ENCODE measurements at regions of chr9 and their contacts with region 1.

Region 1: DNA sequence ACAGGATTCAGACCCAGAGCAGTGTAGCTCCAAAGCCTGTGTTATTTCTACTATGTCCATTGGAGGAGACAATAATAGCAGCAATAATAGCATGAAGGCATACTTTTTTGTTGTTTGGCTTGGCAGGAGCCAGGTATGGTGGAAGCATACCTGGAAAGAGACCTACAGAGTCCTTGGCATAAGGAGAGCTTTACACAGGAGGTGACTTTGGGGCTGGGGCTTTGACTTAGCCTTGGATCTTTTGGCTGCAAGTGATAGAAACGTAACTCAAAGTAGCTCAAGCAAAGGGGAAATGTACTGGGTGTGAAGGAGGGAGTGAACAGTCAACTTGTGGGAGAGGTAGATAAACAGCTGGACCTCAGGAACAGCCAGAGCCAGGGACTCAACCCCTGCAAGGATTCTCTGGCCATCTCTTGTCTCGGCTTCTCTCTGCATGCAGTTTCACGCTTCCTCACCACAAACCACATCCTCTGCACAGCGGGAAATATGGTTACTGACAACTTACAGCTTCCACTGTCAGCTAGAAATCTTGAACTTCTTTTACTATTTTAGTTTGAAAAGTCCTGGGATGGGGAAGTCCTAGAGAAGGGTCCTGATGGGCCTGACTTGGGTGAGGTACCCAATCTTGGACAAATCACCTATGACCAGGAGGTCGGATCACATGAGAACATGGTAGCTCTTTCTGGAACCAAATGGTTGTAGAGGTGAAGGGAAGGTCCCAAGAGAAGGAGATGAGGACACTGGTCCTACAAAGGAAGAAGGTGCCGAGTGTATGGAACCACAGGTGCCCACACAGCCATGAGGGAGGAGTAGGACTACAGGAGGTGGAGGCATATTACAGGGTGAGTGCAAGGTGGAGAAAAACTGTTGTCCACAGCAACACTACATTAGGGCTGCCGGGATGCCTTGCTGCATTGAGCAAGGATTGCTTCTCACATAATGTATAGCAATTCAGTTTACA is 47.0 kb upstream of the TGFBR1 start:
- DNase-seq: peak; percentile 27 to 94 (median 60)
- ATAC-seq: peak; percentile 76
- H3K4me3 ChIP-seq: peak overlapping the region; percentile 47
- H3K4me3 Mint-ChIP-seq: peak overlapping the region; percentile 87
- H3K27ac ChIP-seq: peak overlapping the region in 1 of 2 donors; percentile 57
- H3K27ac Mint-ChIP-seq: peak overlapping the region; percentile 69
- H3K4me1 ChIP-seq: peaks cover 67% of the 10 kb centered on the region
- H3K4me1 Mint-ChIP-seq: peaks cover 76% of the 10 kb centered on the region
- H3K27me3 ChIP-seq: no peaks in the 10 kb centered on the region
- H3K27me3 Mint-ChIP-seq: no peaks in the 10 kb centered on the region
- CTCF ChIP-seq: no peak

Region 2: GRCh38 chr9:98998441-98999151 is 59.3 kb before region 1 on chr9:
- CTCF ChIA-PET with region 1: no interaction called
- POLR2A ChIA-PET with region 1: interaction called, 4 read pairs
- intact Hi-C with region 1: loop called in 1 of 2 experiments (anchors 5 kb)
- DNase-seq: peak; percentile 23 to 70 (median 42)
- ATAC-seq: peak; percentile 46
- H3K4me3 ChIP-seq: no peak overlapping the region
- H3K4me3 Mint-ChIP-seq: no peak overlapping the region
- H3K27ac ChIP-seq: no peak overlapping the region
- H3K27ac Mint-ChIP-seq: no peak overlapping the region
- H3K4me1 ChIP-seq: peaks cover 20% of the 10 kb centered on the region
- H3K4me1 Mint-ChIP-seq: peaks cover 26% of the 10 kb centered on the region
- H3K27me3 ChIP-seq: no peaks in the 10 kb centered on the region
- H3K27me3 Mint-ChIP-seq: no peaks in the 10 kb centered on the region
- CTCF ChIP-seq: peak; percentile 72

Region 3: GRCh38 chr9:99012942-99013512 is 44.9 kb before region 1 on chr9:
- CTCF ChIA-PET with region 1: interaction called, 3 read pairs
- POLR2A ChIA-PET with region 1: interaction called, 18 read pairs
- intact Hi-C with region 1: loop called in 1 of 2 experiments (anchors 5 kb)
- DNase-seq: peak in 3 of 14 experiments; percentile 27 to 45 (median 41)
- ATAC-seq: no peak
- H3K4me3 ChIP-seq: no peak overlapping the region
- H3K4me3 Mint-ChIP-seq: no peak overlapping the region
- H3K27ac ChIP-seq: peak overlapping the region in 1 of 2 donors; percentile 5
- H3K27ac Mint-ChIP-seq: peak overlapping the region; percentile 76
- H3K4me1 ChIP-seq: peaks cover 16% of the 10 kb centered on the region
- H3K4me1 Mint-ChIP-seq: peaks cover 28% of the 10 kb centered on the region
- H3K27me3 ChIP-seq: no peaks in the 10 kb centered on the region
- H3K27me3 Mint-ChIP-seq: no peaks in the 10 kb centered on the region
- CTCF ChIP-seq: no peak

Region 4: GRCh38 chr9:99076483-99077171 is 18.7 kb after region 1 on chr9:
- CTCF ChIA-PET with region 1: no interaction called
- POLR2A ChIA-PET with region 1: interaction called, 38 read pairs
- intact Hi-C with region 1: loop called (anchors 2 kb)
- DNase-seq: peak in 11 of 14 experiments; percentile 17 to 83 (median 44)
- ATAC-seq: peak; percentile 93
- H3K4me3 ChIP-seq: no peak overlapping the region
- H3K4me3 Mint-ChIP-seq: peak overlapping the region; percentile 42
- H3K27ac ChIP-seq: peak overlapping the region in 1 of 2 donors; percentile 64
- H3K27ac Mint-ChIP-seq: peak overlapping the region; percentile 68
- H3K4me1 ChIP-seq: peaks cover 37% of the 10 kb centered on the region
- H3K4me1 Mint-ChIP-seq: peaks cover 61% of the 10 kb centered on the region
- H3K27me3 ChIP-seq: no peaks in the 10 kb centered on the region
- H3K27me3 Mint-ChIP-seq: no peaks in the 10 kb centered on the region
- CTCF ChIP-seq: no peak

Region 5: DNA sequence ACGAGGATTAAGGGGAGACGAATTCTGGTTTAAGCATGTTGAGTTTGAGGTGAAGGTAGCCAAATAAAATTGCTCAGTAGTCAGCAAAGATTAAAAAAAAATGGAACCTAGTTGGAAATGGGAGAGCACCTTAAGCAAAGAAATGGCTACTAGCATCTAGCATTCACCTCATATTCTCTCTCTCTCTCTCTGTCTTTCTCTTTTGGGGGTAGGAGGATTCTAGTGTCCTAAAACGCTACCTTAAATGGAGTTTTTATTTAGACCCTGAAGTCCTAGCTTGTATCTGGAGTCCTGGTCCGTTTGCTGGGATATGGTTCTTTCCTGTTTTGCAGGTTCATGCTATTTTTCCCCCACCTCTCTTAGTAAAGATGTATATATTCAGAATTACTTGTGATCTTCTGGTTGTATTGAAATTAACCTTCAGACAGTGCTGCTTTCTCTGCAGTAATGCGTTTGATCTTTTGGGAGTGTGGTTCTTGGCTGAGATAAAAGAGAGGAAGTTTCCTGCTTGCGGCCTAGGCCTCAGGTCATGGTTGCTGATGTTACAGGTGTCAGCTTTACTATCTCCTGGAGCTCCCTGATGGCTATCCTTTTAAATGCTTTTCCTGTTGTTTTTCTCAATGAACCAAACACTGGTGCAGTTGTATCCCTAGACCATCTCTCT is 54.9 kb after region 1 on chr9:
- CTCF ChIA-PET with region 1: no interaction called
- POLR2A ChIA-PET with region 1: interaction called, 22 read pairs
- intact Hi-C with region 1: loop called in 1 of 2 experiments (anchors 2 kb)
- DNase-seq: peak in 13 of 14 experiments; percentile 18 to 88 (median 39)
- ATAC-seq: peak; percentile 95
- H3K4me3 ChIP-seq: peak overlapping the region; percentile 1
- H3K4me3 Mint-ChIP-seq: peak overlapping the region; percentile 71
- H3K27ac ChIP-seq: no peak overlapping the region
- H3K27ac Mint-ChIP-seq: peak overlapping the region; percentile 71
- H3K4me1 ChIP-seq: peaks cover 50% of the 10 kb centered on the region
- H3K4me1 Mint-ChIP-seq: peaks cover 84% of the 10 kb centered on the region
- H3K27me3 ChIP-seq: no peaks in the 10 kb centered on the region
- H3K27me3 Mint-ChIP-seq: no peaks in the 10 kb centered on the region
- CTCF ChIP-seq: no peak

Region 6: DNA sequence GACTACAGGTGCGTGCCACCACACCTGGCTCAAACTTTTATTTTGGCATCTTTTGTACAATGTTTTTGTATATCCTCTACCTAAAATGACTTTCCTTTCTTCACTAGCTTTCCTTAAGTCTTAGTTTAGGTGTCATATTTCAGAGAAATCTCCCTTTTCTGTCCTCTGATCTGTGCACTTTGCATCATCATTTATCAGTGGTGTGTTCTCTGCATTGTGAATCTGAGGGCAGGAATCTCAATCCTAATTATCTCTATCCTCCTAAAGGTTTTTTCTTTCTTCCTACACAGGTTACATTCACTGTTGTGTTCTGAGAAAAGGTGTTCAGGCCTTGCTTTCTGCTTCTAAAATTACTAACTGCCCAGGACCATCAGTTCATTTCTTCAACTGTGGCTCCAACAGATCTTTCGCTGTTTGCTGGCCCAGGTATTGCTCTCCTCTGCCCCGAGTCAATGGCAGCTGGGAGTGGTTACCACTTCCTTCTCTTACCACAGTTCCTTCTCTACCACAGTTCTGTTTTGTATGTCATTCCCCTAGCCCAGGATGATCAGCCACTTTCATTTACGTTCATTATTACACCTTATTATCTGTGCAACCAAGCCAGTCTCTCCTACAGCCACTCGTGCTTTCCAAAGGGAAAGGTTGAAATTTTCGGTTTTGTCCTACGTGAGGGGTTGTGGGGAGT is 61.0 kb after region 1 on chr9:
- CTCF ChIA-PET with region 1: no interaction called
- POLR2A ChIA-PET with region 1: interaction called, 22 read pairs
- intact Hi-C with region 1: no loop called
- DNase-seq: peak; percentile 21 to 88 (median 46)
- ATAC-seq: peak; percentile 99
- H3K4me3 ChIP-seq: peak overlapping the region; percentile 28
- H3K4me3 Mint-ChIP-seq: peak overlapping the region; percentile 42
- H3K27ac ChIP-seq: peak overlapping the region in 1 of 2 donors; percentile 22
- H3K27ac Mint-ChIP-seq: peak overlapping the region; percentile 70
- H3K4me1 ChIP-seq: peaks cover 32% of the 10 kb centered on the region
- H3K4me1 Mint-ChIP-seq: peaks cover 81% of the 10 kb centered on the region
- H3K27me3 ChIP-seq: no peaks in the 10 kb centered on the region
- H3K27me3 Mint-ChIP-seq: no peaks in the 10 kb centered on the region
- CTCF ChIP-seq: no peak

Region 7: DNA sequence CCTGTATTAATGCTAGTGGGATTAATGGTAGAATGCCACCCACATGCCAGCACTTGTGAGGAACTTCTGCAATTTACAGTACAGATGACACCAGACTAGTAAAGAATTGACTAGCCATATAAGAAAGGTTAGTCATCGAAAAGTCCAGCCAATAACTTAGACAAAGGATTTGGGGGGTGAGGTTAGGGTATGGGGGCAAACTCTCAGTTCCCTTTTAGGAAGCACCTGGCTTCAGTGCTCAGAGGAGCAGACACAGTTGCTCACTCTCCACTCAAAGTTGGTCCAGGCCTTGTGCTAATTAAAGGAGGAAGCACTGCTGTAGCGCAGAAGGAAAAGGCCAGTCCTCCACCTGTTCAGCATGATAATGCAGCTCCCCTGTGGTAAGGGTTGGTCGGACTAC is 72.1 kb after region 1 on chr9:
- CTCF ChIA-PET with region 1: no interaction called
- POLR2A ChIA-PET with region 1: interaction called, 34 read pairs
- intact Hi-C with region 1: loop called (anchors 1 to 5 kb)
- DNase-seq: peak in 1 of 14 experiments; percentile 30
- ATAC-seq: no peak
- H3K4me3 ChIP-seq: no peak overlapping the region
- H3K4me3 Mint-ChIP-seq: peak overlapping the region; percentile 4
- H3K27ac ChIP-seq: peak overlapping the region in 1 of 2 donors; percentile 8
- H3K27ac Mint-ChIP-seq: peak overlapping the region; percentile 79
- H3K4me1 ChIP-seq: peaks cover 36% of the 10 kb centered on the region
- H3K4me1 Mint-ChIP-seq: peaks cover 92% of the 10 kb centered on the region
- H3K27me3 ChIP-seq: no peaks in the 10 kb centered on the region
- H3K27me3 Mint-ChIP-seq: no peaks in the 10 kb centered on the region
- CTCF ChIP-seq: no peak

Region 8: GRCh38 chr9:99150451-99151171 is 92.7 kb after region 1 on chr9:
- CTCF ChIA-PET with region 1: no interaction called
- POLR2A ChIA-PET with region 1: no interaction called
- intact Hi-C with region 1: no loop called
- DNase-seq: peak in 3 of 14 experiments; percentile 42 to 55 (median 52)
- ATAC-seq: peak; percentile 95
- H3K4me3 ChIP-seq: no peak overlapping the region
- H3K4me3 Mint-ChIP-seq: peak overlapping the region; percentile 72
- H3K27ac ChIP-seq: no peak overlapping the region
- H3K27ac Mint-ChIP-seq: peak overlapping the region; percentile 86
- H3K4me1 ChIP-seq: no peaks in the 10 kb centered on the region
- H3K4me1 Mint-ChIP-seq: peaks cover 50% of the 10 kb centered on the region
- H3K27me3 ChIP-seq: no peaks in the 10 kb centered on the region
- H3K27me3 Mint-ChIP-seq: no peaks in the 10 kb centered on the region
- CTCF ChIP-seq: no peak

Region 9: DNA sequence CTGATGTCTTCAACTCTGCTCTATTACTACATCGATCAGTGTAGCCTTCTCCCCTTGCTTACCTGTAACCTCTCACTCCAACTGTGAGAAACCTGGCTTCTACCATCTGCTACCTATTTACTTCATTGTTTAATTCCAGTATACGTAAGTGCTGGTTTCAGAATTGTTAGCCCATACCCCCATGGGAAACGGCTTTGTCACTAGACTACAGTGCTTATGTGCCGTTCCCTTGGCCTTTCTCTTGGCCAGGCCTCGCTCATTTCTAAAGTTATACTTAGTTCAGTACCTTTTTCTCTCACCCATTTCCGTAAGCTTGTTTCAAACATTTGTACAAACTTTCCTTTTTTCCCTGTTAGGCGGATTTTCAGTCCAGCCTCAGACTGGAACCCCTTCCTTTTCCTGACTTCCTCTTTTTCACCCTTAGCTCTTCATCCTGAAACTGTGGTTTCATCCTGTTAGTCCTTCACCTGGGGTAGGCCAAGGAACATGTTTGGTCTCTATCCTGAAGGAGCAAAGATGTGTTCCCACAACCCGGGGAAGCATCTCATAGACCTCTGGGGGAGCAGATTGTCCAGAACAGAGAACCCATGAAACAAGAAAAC is 142.1 kb after region 1 on chr9:
- CTCF ChIA-PET with region 1: no interaction called
- POLR2A ChIA-PET with region 1: no interaction called
- intact Hi-C with region 1: no loop called
- DNase-seq: no peak
- ATAC-seq: no peak
- H3K4me3 ChIP-seq: no peak overlapping the region
- H3K4me3 Mint-ChIP-seq: no peak overlapping the region
- H3K27ac ChIP-seq: no peak overlapping the region
- H3K27ac Mint-ChIP-seq: no peak overlapping the region
- H3K4me1 ChIP-seq: no peaks in the 10 kb centered on the region
- H3K4me1 Mint-ChIP-seq: no peaks in the 10 kb centered on the region
- H3K27me3 ChIP-seq: no peaks in the 10 kb centered on the region
- H3K27me3 Mint-ChIP-seq: no peaks in the 10 kb centered on the region
- CTCF ChIP-seq: no peak

Measured in CD4-positive, alpha-beta T cell (primary cell).